ENCODE measurements at regions of chr22 and their contacts with region 1.

Region 1: DNA sequence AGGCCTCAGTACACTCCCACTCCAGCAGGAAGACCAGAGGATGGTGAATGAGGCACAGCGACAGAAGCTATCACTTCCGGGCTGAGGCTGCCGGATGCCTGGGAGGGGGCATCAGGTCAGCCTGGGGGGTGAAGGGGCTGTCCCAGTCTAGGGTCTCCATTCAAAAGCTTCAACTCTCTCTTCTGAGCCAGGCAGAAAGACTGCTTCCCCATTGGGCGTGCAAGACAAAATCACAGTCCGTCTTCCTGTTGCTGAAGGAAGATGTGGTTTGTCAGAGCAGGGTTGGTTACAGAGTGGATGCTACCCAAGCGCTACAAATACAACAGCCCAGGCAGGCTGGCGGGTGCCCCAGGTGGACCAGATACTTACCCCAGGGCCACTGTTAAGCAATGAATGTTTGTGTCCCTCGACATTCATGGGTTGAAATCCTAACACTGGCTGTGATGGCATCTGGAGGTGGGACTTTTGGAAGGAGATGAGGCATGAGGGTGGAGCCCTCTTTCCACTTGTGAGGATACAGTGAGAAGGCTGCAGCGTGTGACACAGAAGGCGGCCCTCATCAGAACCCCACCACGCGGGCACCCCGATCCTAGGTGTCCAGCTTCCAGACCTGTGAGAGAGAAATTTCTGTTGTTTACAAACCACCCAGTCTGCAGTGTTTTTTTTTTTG is 12.0 kb downstream of the UPK3A start:
- DNase-seq: peak; percentile 17 to 82 (median 55)
- ATAC-seq: peak; percentile 97 to 98
- H3K4me3 Mint-ChIP-seq: peak overlapping the region; percentile 15 to 81 (median 64)
- H3K27ac Mint-ChIP-seq: peak overlapping the region; percentile 87 to 96 (median 91)
- H3K4me1 Mint-ChIP-seq: peaks cover 15 to 40% (median 36%) of the 10 kb centered on the region in 4 donors
- H3K27me3 Mint-ChIP-seq: no peaks in the 10 kb centered on the region

Region 2: GRCh38 chr22:45309472-45310227 is 12.9 kb after region 1 on chr22 and contains the start of gene FAM118A:
- POLR2A ChIA-PET with region 1: interaction called, 48 read pairs
- DNase-seq: peak; percentile 92 to 100 (median 96)
- ATAC-seq: peak; percentile 81 to 82
- H3K4me3 Mint-ChIP-seq: peak within 1 kb of the TSS; percentile 84 to 95 (median 92)
- H3K27ac Mint-ChIP-seq: peak within 1 kb of the TSS; percentile 88 to 98 (median 96)
- H3K4me1 Mint-ChIP-seq: peaks cover 27 to 50% (median 48%) of the 10 kb centered on the region in 4 donors
- H3K27me3 Mint-ChIP-seq: no peaks in the 10 kb centered on the region
- polyA plus RNA-seq, gene FAM118A: 33.2 to 67.8 (median 48.1) TPM

Region 3: DNA sequence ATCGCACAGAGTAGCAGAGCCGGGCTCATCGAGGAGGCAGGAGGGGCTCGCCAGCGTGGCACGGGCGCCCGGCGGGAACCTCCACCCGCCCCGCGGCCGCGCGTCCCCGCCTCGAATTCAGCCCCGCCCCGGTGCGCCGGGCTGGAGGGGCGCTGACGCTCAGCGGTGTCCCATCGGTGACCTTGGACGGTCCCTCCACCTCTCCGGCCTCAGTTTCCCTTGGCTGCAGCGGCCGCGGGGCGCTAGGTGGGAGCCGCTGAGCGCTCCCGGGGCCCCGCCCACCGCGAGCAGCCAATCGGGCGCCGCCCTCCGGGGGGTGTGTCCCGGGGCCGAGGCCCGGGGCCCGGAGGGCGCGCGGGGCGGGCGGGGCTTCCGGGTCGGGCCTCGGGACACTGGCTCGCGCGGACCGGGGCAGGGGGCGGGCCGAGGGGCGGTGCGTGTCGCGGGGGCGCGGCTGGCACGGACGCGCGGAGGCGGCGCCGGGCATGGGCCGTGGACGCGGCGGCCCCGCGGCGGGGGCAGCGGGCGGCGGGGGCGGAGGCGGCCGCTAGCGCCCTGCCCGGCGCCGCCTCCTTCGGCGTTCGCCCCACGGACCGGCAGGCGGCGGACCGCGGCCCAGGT is 853.4 kb after region 1 on chr22 and contains the start of gene PPARA:
- POLR2A ChIA-PET with region 1: interaction called, 10 read pairs
- DNase-seq: peak; percentile 64 to 90 (median 78)
- ATAC-seq: peak; percentile 63 to 76
- H3K4me3 Mint-ChIP-seq: peak within 1 kb of the TSS; percentile 82 to 97 (median 86)
- H3K27ac Mint-ChIP-seq: peak within 1 kb of the TSS; percentile 34 to 93 (median 82)
- H3K4me1 Mint-ChIP-seq: peaks cover 13 to 28% (median 23%) of the 10 kb centered on the region in 4 donors
- H3K27me3 Mint-ChIP-seq: no peaks in the 10 kb centered on the region
- polyA plus RNA-seq, gene PPARA: 3.5 to 3.7 (median 3.7) TPM